OCI-LY7 (cell line): ENCODE measurements at regions of chr7 and their contacts with region 1.

Region 1: GRCh38 chr7:143240291-143241168 is 18.7 kb downstream of the TAS2R40 start:
- DNase-seq: peak; percentile 74
- H3K4me3 ChIP-seq: no peak overlapping the region
- H3K27ac ChIP-seq: no peak overlapping the region
- H3K4me1 ChIP-seq: no peaks in the 10 kb centered on the region
- CTCF ChIP-seq: peak; percentile 98

Region 2: GRCh38 chr7:143279186-143280098 is 38.9 kb after region 1 on chr7:
- CTCF ChIA-PET with region 1: no interaction called
- POLR2A ChIA-PET with region 1: no interaction called
- intact Hi-C with region 1: no loop called
- DNase-seq: no peak
- H3K4me3 ChIP-seq: no peak overlapping the region
- H3K27ac ChIP-seq: no peak overlapping the region
- H3K4me1 ChIP-seq: peaks cover 15% of the 10 kb centered on the region
- CTCF ChIP-seq: no peak

Region 3: GRCh38 chr7:143305423-143306070 is 65.0 kb after region 1 on chr7:
- CTCF ChIA-PET with region 1: interaction called, 4 read pairs
- POLR2A ChIA-PET with region 1: no interaction called
- intact Hi-C with region 1: loop called (anchors 1 kb)
- DNase-seq: peak; percentile 47
- H3K4me3 ChIP-seq: no peak overlapping the region
- H3K27ac ChIP-seq: no peak overlapping the region
- H3K4me1 ChIP-seq: no peaks in the 10 kb centered on the region
- CTCF ChIP-seq: peak; percentile 86